Caco-2 (cell line): ENCODE measurements at regions of chr12 and their contacts with region 1.

Region 1: DNA sequence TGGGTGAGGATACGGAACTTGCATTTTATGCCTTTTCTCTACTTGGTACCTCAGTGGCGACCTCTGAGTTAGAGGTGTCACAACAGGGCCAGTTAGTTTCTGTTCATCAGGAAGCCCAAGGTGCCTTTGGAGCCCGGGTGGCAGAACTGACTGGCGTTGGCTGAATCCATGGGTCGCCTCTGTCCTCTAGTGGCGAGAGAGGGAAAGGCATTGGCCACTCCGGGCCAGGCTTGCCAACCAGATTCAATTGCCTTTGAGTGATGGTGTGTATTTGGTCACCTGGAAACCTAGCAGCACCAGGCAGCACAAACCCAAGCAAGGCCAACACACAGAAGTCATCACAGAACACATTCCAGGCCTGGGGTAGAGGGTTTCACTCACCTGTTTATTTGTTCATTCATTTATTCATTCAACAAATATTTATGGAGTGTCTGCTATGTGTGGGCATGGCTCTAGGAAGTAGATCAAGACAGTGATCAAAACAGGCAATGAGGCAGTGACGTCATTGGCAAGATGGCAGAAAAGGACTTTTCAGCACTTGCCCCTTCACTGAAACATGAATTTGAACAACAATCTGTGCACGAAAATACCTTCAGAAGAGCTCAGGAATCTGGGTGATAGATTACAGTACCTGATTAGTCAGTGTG is 40.5 kb upstream of the KCNA5 start:
- DNase-seq: peak; percentile 80 to 85
- H3K4me3 ChIP-seq: no peak overlapping the region
- H3K4me3 Mint-ChIP-seq: no peak overlapping the region
- H3K27ac Mint-ChIP-seq: no peak overlapping the region
- H3K4me1 ChIP-seq: no peaks in the 10 kb centered on the region
- H3K4me1 Mint-ChIP-seq: no peaks in the 10 kb centered on the region
- H3K27me3 ChIP-seq: peaks cover 6% of the 10 kb centered on the region
- H3K27me3 Mint-ChIP-seq: peaks cover 28% of the 10 kb centered on the region
- CTCF ChIP-seq: peak; percentile 99

Region 2: GRCh38 chr12:4579305-4580102 is 423.6 kb before region 1 on chr12:
- CTCF ChIA-PET with region 1: no interaction called
- POLR2A ChIA-PET with region 1: no interaction called
- intact Hi-C with region 1: loop called (anchors 2 kb)
- DNase-seq: peak; percentile 54 to 55
- H3K4me3 ChIP-seq: no peak overlapping the region
- H3K4me3 Mint-ChIP-seq: no peak overlapping the region
- H3K27ac Mint-ChIP-seq: no peak overlapping the region
- H3K4me1 ChIP-seq: no peaks in the 10 kb centered on the region
- H3K4me1 Mint-ChIP-seq: no peaks in the 10 kb centered on the region
- H3K27me3 ChIP-seq: no peaks in the 10 kb centered on the region; the same call in 1 of the 2 replicates
- H3K27me3 Mint-ChIP-seq: peaks cover 40% of the 10 kb centered on the region
- CTCF ChIP-seq: peak; percentile 59 to 62

Region 3: DNA sequence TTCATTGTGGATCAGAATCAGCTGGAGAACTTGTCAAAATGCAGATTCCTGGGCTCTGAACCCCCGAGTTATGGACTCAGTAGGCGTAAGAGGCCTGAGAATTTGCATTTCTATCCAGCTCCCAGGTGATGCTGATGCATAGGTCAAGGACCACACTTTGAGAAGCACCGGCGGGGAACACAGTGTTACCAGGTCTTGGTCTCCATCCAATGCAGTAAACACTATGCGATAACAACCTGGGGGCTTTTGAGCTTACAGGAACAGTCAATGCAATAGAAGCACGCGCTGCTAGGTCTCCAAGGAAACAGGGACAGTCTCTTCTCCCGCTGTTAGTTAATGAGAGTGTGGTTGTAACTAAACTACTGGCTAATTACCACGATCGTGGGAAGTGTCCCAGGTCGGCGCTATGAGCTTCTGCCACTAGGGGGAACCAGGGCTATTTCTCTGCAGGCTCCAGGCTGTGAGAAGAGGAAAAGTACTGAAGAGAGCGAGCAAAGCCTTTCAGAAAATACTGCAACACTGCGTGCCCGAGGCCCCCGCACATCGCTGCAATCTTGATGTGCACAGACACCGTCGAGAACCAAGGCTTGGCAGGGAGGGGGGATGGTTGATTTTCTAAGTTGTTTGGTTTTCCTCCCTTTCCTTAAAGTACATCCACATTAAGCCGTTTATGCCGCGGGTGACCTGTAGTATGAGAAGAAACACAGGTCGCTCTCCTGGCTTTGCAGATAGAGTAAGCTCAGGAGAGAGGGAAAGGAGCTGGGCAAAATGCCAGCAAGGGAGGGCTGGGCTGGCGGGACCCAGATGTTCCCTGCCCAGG is 145.5 kb before region 1 on chr12:
- CTCF ChIA-PET with region 1: interaction called, 20 read pairs
- POLR2A ChIA-PET with region 1: no interaction called
- intact Hi-C with region 1: loop called (anchors 1 kb)
- DNase-seq: peak; percentile 74 to 87
- H3K4me3 ChIP-seq: 0 out of 2 replicates have a peak overlapping the region, but pooled peaks have one; percentile 6
- H3K4me3 Mint-ChIP-seq: peak overlapping the region; percentile 44
- H3K27ac Mint-ChIP-seq: no peak overlapping the region
- H3K4me1 ChIP-seq: 0 out of 2 replicates have a peak, but pooled peaks cover 3% of the 10 kb centered on the region
- H3K4me1 Mint-ChIP-seq: peaks cover 7% of the 10 kb centered on the region
- H3K27me3 ChIP-seq: no peaks in the 10 kb centered on the region; the same call in 1 of the 2 replicates
- H3K27me3 Mint-ChIP-seq: peaks cover 35% of the 10 kb centered on the region
- CTCF ChIP-seq: peak; percentile 94 to 97

Region 4: DNA sequence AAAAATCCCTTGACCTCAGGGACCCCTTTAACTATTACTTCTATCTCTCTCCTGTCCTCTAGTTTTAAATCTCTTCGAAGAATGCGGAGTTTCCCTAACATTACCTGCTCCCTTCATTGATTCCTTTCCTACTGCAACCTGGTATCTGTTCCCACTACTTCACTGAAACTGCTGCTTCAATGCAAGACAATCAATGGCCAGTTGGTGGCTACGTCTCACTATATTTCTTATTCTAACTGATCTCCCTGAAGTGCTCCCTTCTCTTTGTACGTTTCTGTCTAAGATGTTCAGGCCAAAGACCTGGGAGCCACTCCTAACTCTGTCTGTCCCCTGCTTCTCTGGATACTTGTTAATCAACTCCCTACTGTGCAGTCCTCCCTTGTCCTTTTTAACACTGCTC is 103.8 kb before region 1 on chr12:
- CTCF ChIA-PET with region 1: no interaction called
- POLR2A ChIA-PET with region 1: no interaction called
- intact Hi-C with region 1: loop called (anchors 1 kb)
- DNase-seq: no peak
- H3K4me3 ChIP-seq: no peak overlapping the region
- H3K4me3 Mint-ChIP-seq: no peak overlapping the region
- H3K27ac Mint-ChIP-seq: no peak overlapping the region
- H3K4me1 ChIP-seq: no peaks in the 10 kb centered on the region
- H3K4me1 Mint-ChIP-seq: no peaks in the 10 kb centered on the region
- H3K27me3 ChIP-seq: no peaks in the 10 kb centered on the region
- H3K27me3 Mint-ChIP-seq: peaks cover 18% of the 10 kb centered on the region
- CTCF ChIP-seq: peak; percentile 19 to 36

Region 5: GRCh38 chr12:4939418-4940019 is 63.6 kb before region 1 on chr12:
- CTCF ChIA-PET with region 1: no interaction called
- POLR2A ChIA-PET with region 1: no interaction called
- intact Hi-C with region 1: loop called (anchors 1 kb)
- DNase-seq: peak in 1 of 2 experiments; percentile 8
- H3K4me3 ChIP-seq: no peak overlapping the region
- H3K4me3 Mint-ChIP-seq: no peak overlapping the region
- H3K27ac Mint-ChIP-seq: no peak overlapping the region
- H3K4me1 ChIP-seq: no peaks in the 10 kb centered on the region
- H3K4me1 Mint-ChIP-seq: no peaks in the 10 kb centered on the region
- H3K27me3 ChIP-seq: 0 out of 2 replicates have a peak, but pooled peaks cover 1% of the 10 kb centered on the region
- H3K27me3 Mint-ChIP-seq: peaks cover 20% of the 10 kb centered on the region
- CTCF ChIP-seq: peak; percentile 43 to 49